Activated T-helper 1 cell treated with anti-CD3 and anti-CD28 coated beads, Interleukin-12 subunit alpha, Interleukin-12 subunit beta, Interleukin-2, Interleukin-4 antibody, amounts not matched to agents 30 ng/mL and 10 ng/mL and 1 ng/mL, durations not matched to agents 14 hours and 24 hours and 36 hours (primary cell): ENCODE measurements at regions of chr11 and their contacts with region 1.

Region 1: DNA sequence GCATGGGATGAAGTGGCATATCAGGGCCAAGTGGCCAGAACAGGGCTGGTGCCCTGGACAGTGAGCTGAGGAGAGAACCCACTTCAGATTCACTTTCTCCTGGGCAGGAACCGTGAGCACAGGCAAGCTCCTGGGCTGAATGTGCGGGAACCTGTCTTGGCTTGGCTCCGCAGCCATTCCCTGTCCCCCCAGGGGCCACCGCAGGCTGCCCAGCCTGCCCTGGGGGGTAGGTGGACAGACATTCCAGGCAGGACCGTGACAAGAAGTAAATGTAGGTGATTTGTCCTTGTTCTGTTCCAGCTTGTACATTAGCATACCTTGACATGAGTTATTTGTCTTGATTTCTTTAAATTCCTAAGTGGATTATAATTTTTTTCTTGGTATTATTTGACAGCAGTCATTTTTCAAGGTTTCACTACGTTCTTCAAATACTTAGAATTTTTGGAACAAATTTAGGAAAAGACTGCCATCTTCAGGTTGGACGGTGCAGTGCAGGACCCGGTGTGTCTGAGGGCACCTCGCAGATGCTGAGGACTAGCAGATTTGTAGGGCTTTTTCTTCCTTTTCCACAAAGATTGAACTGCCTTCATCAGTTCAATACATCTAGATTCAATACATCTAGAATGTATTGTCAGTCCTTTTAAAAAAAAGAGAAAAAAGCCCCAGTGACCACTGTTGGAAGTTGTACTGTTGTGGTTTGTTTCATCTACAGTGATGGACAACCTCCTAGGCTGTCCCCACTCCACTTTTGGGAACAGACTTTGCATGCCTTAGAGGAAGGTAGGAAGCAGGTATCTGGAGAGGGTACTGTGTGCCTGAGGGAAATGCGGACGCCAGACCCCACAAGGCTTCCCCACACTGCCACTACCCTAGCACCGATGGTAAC is 115.1 kb upstream of the RASSF10 start:
- DNase-seq: peak; percentile 18
- H3K4me3 Mint-ChIP-seq: no peak overlapping the region
- H3K27ac Mint-ChIP-seq: no peak overlapping the region
- H3K4me1 Mint-ChIP-seq: peaks cover 1% of the 10 kb centered on the region
- H3K27me3 Mint-ChIP-seq: peaks cover 17% of the 10 kb centered on the region

Region 2: GRCh38 chr11:12331239-12331874 is 562.7 kb before region 1 on chr11:
- intact Hi-C with region 1: loop called (anchors 1 kb)
- DNase-seq: peak; percentile 48
- H3K4me3 Mint-ChIP-seq: no peak overlapping the region
- H3K27ac Mint-ChIP-seq: no peak overlapping the region
- H3K4me1 Mint-ChIP-seq: peaks cover 6% of the 10 kb centered on the region
- H3K27me3 Mint-ChIP-seq: peaks cover 1% of the 10 kb centered on the region

Region 3: DNA sequence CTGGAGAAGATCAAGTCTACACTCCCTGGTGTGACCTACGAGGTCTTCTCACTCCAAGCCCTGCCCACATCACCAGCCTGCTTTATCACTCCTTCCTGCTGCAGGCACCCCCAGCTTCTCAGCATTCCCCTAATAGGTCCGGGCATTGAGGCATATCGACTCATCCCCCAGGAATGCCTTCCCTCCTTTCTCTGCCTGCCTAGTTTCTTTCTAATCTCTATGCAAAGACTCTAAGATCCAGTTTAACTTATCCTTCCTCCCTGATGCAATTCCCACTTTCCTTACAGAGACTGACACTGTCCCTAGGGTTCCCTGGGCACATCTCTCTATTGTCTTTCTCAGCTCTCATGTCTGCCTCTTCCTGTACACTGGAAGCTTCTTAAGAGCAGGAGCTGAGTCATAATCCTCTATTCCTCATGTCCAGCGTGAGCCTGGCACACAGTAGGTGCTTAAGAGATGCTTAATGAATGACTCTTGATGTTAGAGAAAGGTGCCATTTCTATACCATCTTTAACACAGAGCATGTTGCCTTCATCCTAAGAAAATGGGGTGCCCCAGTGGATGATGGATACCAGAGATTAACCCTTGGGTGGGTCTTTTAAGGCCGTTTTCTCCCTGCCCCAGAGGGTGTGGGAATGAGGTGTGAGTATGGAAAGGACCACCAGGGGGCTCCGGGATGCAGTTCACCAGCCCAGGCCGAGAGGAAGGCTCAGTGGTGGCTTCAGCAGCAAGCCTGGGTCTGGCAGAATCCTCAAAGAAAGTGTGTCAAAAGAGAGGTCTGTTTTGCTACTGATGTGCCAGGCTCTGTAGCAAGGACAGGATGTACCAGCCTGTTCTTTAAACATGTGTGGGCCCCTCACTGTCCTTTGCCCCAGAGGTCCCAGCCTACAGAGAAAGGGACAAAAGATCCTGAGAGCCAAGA is 482.0 kb before region 1 on chr11:
- intact Hi-C with region 1: loop called (anchors 2 kb)
- DNase-seq: no peak
- H3K4me3 Mint-ChIP-seq: no peak overlapping the region
- H3K27ac Mint-ChIP-seq: no peak overlapping the region
- H3K4me1 Mint-ChIP-seq: no peaks in the 10 kb centered on the region
- H3K27me3 Mint-ChIP-seq: peaks cover 5% of the 10 kb centered on the region

Region 4: GRCh38 chr11:12430955-12431354 is 463.1 kb before region 1 on chr11:
- intact Hi-C with region 1: no loop called
- DNase-seq: no peak
- H3K4me3 Mint-ChIP-seq: no peak overlapping the region
- H3K27ac Mint-ChIP-seq: no peak overlapping the region
- H3K4me1 Mint-ChIP-seq: no peaks in the 10 kb centered on the region
- H3K27me3 Mint-ChIP-seq: peaks cover 2% of the 10 kb centered on the region

Region 5: GRCh38 chr11:12599408-12600143 is 294.5 kb before region 1 on chr11:
- intact Hi-C with region 1: loop called (anchors 1 kb)
- DNase-seq: peak; percentile 22
- H3K4me3 Mint-ChIP-seq: no peak overlapping the region
- H3K27ac Mint-ChIP-seq: no peak overlapping the region
- H3K4me1 Mint-ChIP-seq: no peaks in the 10 kb centered on the region
- H3K27me3 Mint-ChIP-seq: peaks cover 6% of the 10 kb centered on the region

Region 6: GRCh38 chr11:12868315-12869073 is 25.5 kb before region 1 on chr11:
- intact Hi-C with region 1: no loop called
- DNase-seq: no peak
- H3K4me3 Mint-ChIP-seq: no peak overlapping the region
- H3K27ac Mint-ChIP-seq: no peak overlapping the region
- H3K4me1 Mint-ChIP-seq: peaks cover 8% of the 10 kb centered on the region
- H3K27me3 Mint-ChIP-seq: peaks cover 35% of the 10 kb centered on the region

Region 7: DNA sequence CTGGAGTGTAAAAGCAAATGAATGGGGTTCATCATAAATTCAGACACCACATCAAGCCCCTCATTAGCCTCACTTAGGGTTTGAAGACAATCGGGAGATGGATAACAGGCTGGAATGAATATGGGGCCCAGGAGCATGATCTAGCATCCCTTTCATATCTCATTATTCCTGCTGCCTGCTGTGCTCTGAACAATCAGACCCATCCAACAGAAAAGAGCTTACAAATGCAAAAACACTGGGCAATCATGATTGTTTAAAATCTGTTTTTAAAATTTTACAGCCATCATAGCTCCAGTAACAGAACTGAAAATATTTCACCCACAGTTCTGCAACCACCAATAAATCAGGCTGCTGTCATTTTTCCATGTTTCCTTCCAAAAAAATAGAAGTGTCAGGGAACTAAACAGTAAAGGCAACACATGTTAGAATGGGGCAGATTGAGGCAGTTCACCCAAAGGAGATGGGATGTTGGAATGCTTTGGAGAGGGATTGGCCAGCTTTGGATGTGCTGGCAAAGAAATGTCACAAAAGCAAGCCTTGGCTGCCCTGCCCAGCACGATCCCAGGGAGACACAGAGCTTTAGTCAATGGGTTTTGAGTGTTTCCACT is 335.8 kb after region 1 on chr11:
- intact Hi-C with region 1: no loop called
- DNase-seq: no peak
- H3K4me3 Mint-ChIP-seq: no peak overlapping the region
- H3K27ac Mint-ChIP-seq: no peak overlapping the region
- H3K4me1 Mint-ChIP-seq: no peaks in the 10 kb centered on the region
- H3K27me3 Mint-ChIP-seq: peaks cover 28% of the 10 kb centered on the region